ENCODE measurements at regions of chr14 and their contacts with region 1.

Region 1: DNA sequence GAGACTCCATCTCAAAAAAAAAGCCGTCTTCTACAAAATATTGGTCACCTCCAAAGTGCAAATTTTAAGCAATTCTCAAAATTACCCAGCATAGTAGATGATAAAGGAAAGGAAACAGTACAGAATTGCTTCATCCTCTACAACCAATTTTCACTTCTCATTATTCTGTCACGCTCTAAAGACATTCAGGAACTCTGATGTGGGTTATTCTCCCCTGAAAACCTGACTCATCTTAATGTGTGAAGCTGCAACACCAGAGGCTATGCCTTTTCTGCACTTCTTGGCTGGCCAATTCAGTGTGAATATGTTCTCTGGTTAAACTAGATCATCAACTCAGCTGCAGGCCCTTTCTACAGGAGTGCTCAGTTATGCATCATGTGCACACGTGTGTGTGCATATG is 11.0 kb downstream of the PTGER2 start:
- DNase-seq: peak; percentile 52
- H3K4me3 Mint-ChIP-seq: no peak overlapping the region
- H3K27ac Mint-ChIP-seq: peak overlapping the region; percentile 7
- H3K4me1 Mint-ChIP-seq: peaks cover 47% of the 10 kb centered on the region
- H3K27me3 Mint-ChIP-seq: no peaks in the 10 kb centered on the region

Region 2: DNA sequence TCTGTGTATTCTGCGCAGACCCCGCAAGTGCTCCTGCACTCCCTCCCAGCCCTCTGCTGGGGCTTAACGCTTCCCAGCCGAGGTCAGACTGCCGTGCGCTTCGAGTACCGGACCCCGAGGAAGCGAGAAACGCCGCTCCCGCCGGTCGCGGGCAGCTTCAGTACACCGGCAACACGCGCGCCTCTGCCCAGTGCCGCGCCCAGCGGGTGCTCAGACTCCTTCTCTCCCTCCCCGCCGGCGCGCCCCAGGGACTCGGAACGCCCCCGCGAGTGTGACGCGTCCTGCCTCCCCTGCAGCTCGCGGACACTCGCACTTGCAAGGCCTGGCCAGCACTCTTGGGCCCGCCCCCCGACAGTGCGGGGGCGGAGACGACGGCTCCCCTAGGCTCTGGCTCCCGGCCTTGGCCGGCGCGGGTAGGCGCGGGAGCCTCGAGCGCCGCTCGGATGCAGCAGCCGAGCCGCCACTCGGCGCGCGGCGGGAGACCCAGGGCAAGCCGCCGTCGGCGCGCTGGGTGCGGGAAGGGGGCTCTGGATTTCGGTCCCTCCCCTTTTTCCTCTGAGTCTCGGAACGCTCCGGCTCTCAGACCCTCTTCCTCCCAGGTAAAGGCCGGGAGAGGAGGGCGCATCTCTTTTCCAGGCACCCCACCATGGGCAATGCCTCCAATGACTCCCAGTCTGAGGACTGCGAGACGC is 11.1 kb before region 1 on chr14 and contains the start of gene PTGER2:
- CTCF ChIA-PET with region 1: interaction called, 4 read pairs
- intact Hi-C with region 1: loop called (anchors 1 kb)
- DNase-seq: peak; percentile 64
- H3K4me3 Mint-ChIP-seq: peak within 1 kb of the TSS; percentile 93
- H3K27ac Mint-ChIP-seq: peak within 1 kb of the TSS; percentile 79
- H3K4me1 Mint-ChIP-seq: peaks cover 56% of the 10 kb centered on the region
- H3K27me3 Mint-ChIP-seq: peaks cover 19% of the 10 kb centered on the region
- total RNA-seq, gene PTGER2: 0.67 to 1.2 TPM

Region 3: DNA sequence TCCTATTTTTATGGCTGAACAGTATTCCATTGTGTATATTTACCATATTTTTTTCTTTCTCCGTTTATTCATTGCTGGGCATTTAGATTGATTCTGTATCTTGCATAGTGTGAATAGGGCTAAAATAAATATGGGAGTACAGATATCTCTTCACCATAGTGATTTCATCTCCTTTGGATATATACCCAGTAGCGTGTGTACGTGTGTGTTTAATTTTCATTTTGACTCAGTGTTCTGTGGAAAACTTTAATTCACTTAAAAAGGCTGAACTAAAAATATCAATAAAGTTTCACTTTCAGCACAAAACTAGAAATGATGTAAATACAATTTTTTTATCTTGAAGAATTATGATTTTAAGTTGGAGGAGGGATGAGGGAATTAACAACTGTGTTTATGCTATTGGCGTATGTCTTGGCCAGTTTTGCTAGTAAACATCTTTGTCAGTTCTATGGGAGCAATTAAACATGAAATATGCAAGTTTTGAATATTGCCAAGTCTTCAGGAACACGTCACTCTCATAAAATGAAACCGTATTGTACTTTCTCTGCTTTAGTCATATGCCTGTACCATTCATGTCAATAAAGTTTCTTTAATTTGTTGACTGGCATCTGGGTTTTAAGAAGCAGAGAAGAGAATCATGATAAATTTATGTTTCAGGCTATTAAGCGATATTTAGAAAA is 88.7 kb after region 1 on chr14:
- CTCF ChIA-PET with region 1: interaction called, 3 read pairs
- intact Hi-C with region 1: loop called (anchors 1 kb)
- DNase-seq: no peak
- H3K4me3 Mint-ChIP-seq: peak overlapping the region; percentile 14
- H3K27ac Mint-ChIP-seq: peak overlapping the region; percentile 85
- H3K4me1 Mint-ChIP-seq: peaks cover 39% of the 10 kb centered on the region
- H3K27me3 Mint-ChIP-seq: no peaks in the 10 kb centered on the region

Region 4: GRCh38 chr14:52741865-52742264 is 416.7 kb after region 1 on chr14:
- CTCF ChIA-PET with region 1: no interaction called
- intact Hi-C with region 1: loop called (anchors 2 kb)
- DNase-seq: no peak
- H3K4me3 Mint-ChIP-seq: peak overlapping the region; percentile 68
- H3K27ac Mint-ChIP-seq: peak overlapping the region; percentile 95
- H3K4me1 Mint-ChIP-seq: peaks cover 63% of the 10 kb centered on the region
- H3K27me3 Mint-ChIP-seq: no peaks in the 10 kb centered on the region

Measured in activated naive CD4-positive, alpha-beta T cell treated with anti-CD3 and anti-CD28 coated beads for 36 hours (primary cell).